Naive thymus-derived CD4-positive, alpha-beta T cell (primary cell): ENCODE measurements at regions of chr13 and their contacts with region 1.

Region 1: GRCh38 chr13:25574437-25575411 is 202.9 kb downstream of the ATP8A2 start:
- DNase-seq: peak; percentile 42 to 79 (median 68)
- ATAC-seq: peak; percentile 80
- H3K4me3 ChIP-seq: no peak overlapping the region
- H3K4me3 Mint-ChIP-seq: no peak overlapping the region
- H3K27ac ChIP-seq: no peak overlapping the region
- H3K27ac Mint-ChIP-seq: no peak overlapping the region
- H3K4me1 ChIP-seq: no peaks in the 10 kb centered on the region
- H3K4me1 Mint-ChIP-seq: peaks cover 0 to 10% (median 0%) of the 10 kb centered on the region in 7 donors
- H3K27me3 ChIP-seq: no peaks in the 10 kb centered on the region
- H3K27me3 Mint-ChIP-seq: peaks cover 31 to 58% (median 40%) of the 10 kb centered on the region in 5 donors

Region 2: GRCh38 chr13:25501231-25501630 is 73.5 kb before region 1 on chr13:
- CTCF ChIA-PET with region 1: no interaction called
- POLR2A ChIA-PET with region 1: no interaction called
- intact Hi-C with region 1: no loop called
- DNase-seq: no peak
- ATAC-seq: no peak
- H3K4me3 ChIP-seq: no peak overlapping the region
- H3K4me3 Mint-ChIP-seq: no peak overlapping the region
- H3K27ac ChIP-seq: no peak overlapping the region
- H3K27ac Mint-ChIP-seq: no peak overlapping the region
- H3K4me1 ChIP-seq: no peaks in the 10 kb centered on the region
- H3K4me1 Mint-ChIP-seq: no peaks in the 10 kb centered on the region
- H3K27me3 ChIP-seq: no peaks in the 10 kb centered on the region
- H3K27me3 Mint-ChIP-seq: peaks cover 6 to 49% (median 23%) of the 10 kb centered on the region in 5 donors

Region 3: DNA sequence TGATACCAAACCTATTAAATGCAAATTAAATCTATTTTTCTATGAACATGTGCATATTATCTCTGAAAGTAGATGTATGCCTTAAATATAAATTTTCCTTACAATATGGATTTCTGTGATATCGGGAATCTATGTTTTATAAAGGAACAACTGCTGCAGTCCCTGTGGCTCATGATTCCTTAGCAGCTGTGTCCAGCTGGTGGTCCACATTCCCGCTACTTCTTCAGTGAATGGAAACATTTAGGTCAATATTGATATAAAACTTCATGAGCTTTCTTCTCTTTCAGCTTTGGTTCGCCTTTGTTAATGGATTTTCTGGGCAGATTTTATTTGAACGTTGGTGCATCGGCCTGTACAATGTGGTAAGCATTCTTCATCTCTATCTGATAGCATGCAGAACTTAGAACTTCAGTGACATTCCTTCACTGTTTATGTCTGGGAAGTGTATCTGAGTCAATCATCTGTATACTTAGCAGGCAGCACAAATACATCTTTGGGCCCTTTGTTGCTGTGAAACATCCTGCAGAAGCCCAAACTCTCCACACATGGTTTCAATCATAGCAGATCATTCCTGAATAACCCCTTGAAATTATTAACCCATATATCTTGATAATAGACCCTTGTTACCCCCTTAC is 253.2 kb after region 1 on chr13:
- CTCF ChIA-PET with region 1: interaction called, 5 read pairs
- POLR2A ChIA-PET with region 1: no interaction called
- intact Hi-C with region 1: loop called (anchors 1 to 2 kb)
- DNase-seq: no peak
- ATAC-seq: no peak
- H3K4me3 ChIP-seq: no peak overlapping the region
- H3K4me3 Mint-ChIP-seq: no peak overlapping the region
- H3K27ac ChIP-seq: no peak overlapping the region
- H3K27ac Mint-ChIP-seq: no peak overlapping the region
- H3K4me1 ChIP-seq: no peaks in the 10 kb centered on the region
- H3K4me1 Mint-ChIP-seq: peaks cover 0 to 5% (median 0%) of the 10 kb centered on the region in 7 donors
- H3K27me3 ChIP-seq: peaks cover 0 to 4% of the 10 kb centered on the region in 2 donors
- H3K27me3 Mint-ChIP-seq: peaks cover 0 to 4% (median 0%) of the 10 kb centered on the region in 5 donors

Region 4: GRCh38 chr13:26062844-26063444 is 488.2 kb after region 1 on chr13:
- CTCF ChIA-PET with region 1: interaction called, 17 read pairs
- POLR2A ChIA-PET with region 1: no interaction called
- intact Hi-C with region 1: loop called (anchors 1 kb)
- DNase-seq: peak in 7 of 9 donors; percentile 30 to 67 (median 58)
- ATAC-seq: peak; percentile 66
- H3K4me3 ChIP-seq: no peak overlapping the region
- H3K4me3 Mint-ChIP-seq: no peak overlapping the region
- H3K27ac ChIP-seq: no peak overlapping the region
- H3K27ac Mint-ChIP-seq: no peak overlapping the region
- H3K4me1 ChIP-seq: no peaks in the 10 kb centered on the region
- H3K4me1 Mint-ChIP-seq: peaks cover 0 to 16% (median 4%) of the 10 kb centered on the region in 7 donors
- H3K27me3 ChIP-seq: no peaks in the 10 kb centered on the region
- H3K27me3 Mint-ChIP-seq: peaks cover 0 to 7% (median 0%) of the 10 kb centered on the region in 5 donors

Region 5: DNA sequence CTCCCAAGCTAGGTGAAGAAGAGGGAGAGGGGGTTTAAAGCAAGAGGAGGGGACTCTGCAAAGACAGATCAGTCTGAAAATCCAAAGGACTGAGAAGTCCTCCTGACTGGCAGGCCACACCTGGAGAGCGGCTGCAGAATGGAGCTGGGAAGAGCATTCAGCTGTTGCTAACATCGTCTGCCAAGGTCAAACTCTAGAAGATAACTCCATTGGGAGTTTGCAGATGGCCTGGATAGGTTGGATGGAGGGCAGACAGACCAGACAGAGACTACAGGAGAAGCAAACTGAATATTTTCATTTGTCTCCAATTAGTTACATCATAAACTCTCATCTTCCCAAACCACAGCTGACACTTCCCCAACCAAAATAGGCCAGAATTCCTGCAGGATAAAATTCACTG is 497.0 kb after region 1 on chr13:
- CTCF ChIA-PET with region 1: interaction called, 17 read pairs
- POLR2A ChIA-PET with region 1: no interaction called
- intact Hi-C with region 1: loop called (anchors 1 kb)
- DNase-seq: no peak
- ATAC-seq: no peak
- H3K4me3 ChIP-seq: no peak overlapping the region
- H3K4me3 Mint-ChIP-seq: no peak overlapping the region
- H3K27ac ChIP-seq: no peak overlapping the region
- H3K27ac Mint-ChIP-seq: no peak overlapping the region
- H3K4me1 ChIP-seq: no peaks in the 10 kb centered on the region
- H3K4me1 Mint-ChIP-seq: peaks cover 0 to 3% (median 0%) of the 10 kb centered on the region in 7 donors
- H3K27me3 ChIP-seq: peaks cover 0 to 2% of the 10 kb centered on the region in 2 donors
- H3K27me3 Mint-ChIP-seq: peaks cover 11 to 42% (median 29%) of the 10 kb centered on the region in 5 donors

Region 6: GRCh38 chr13:26498656-26499591 is 924.2 kb after region 1 on chr13:
- CTCF ChIA-PET with region 1: no interaction called
- POLR2A ChIA-PET with region 1: no interaction called
- intact Hi-C with region 1: loop called in 1 of 2 experiments (anchors 2 kb)
- DNase-seq: no peak
- ATAC-seq: no peak
- H3K4me3 ChIP-seq: no peak overlapping the region
- H3K4me3 Mint-ChIP-seq: no peak overlapping the region
- H3K27ac ChIP-seq: no peak overlapping the region
- H3K27ac Mint-ChIP-seq: no peak overlapping the region
- H3K4me1 ChIP-seq: no peaks in the 10 kb centered on the region
- H3K4me1 Mint-ChIP-seq: peaks cover 4 to 15% (median 5%) of the 10 kb centered on the region in 7 donors
- H3K27me3 ChIP-seq: no peaks in the 10 kb centered on the region
- H3K27me3 Mint-ChIP-seq: peaks cover 0 to 9% (median 4%) of the 10 kb centered on the region in 5 donors

Region 7: DNA sequence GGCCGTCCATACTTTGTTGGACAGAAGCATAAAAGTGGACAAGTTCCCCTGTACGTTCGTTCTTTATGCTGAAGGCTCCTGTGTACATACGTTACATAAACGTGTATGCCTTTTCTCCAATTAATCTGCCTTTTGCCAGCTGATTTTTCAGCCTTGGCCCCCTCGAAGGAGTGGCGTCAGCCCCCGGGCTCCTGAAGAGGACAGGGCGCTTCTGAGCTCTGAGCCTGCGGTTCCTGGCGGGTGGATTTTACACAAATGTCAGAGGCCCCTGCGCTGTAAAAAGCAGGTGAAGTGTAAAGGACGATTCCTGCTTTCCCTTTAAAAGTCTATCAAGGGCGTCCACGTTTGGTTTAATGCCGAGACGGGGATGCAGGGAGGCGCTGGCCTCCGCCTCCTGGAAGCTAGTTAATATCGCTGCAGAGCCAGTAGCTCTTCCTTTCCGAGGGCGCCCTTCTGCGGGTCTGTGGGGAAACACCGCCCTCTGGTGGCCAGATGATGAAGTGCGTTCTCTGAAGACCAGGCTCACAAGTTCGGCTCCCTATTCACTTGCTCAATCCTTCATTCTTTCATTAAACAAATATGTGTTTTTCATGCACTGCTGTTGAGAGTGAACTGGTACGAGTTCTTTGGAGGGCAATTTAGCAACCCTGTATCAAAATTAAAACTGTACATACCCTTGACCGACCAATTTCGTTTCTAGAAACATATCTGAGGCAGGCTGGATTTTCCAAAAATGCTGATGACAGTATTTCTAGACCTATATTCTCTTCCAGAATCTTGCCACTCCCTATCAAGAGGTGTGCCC is 1123.9 kb after region 1 on chr13:
- CTCF ChIA-PET with region 1: no interaction called
- POLR2A ChIA-PET with region 1: no interaction called
- intact Hi-C with region 1: loop called in 1 of 2 experiments (anchors 1 kb)
- DNase-seq: peak; percentile 52 to 81 (median 79)
- ATAC-seq: peak; percentile 89
- H3K4me3 ChIP-seq: no peak overlapping the region
- H3K4me3 Mint-ChIP-seq: peak overlapping the region in 5 of 10 donors; percentile 28 to 45 (median 39)
- H3K27ac ChIP-seq: no peak overlapping the region
- H3K27ac Mint-ChIP-seq: no peak overlapping the region
- H3K4me1 ChIP-seq: no peaks in the 10 kb centered on the region
- H3K4me1 Mint-ChIP-seq: peaks cover 0 to 10% (median 5%) of the 10 kb centered on the region in 7 donors
- H3K27me3 ChIP-seq: no peaks in the 10 kb centered on the region
- H3K27me3 Mint-ChIP-seq: peaks cover 0 to 23% (median 3%) of the 10 kb centered on the region in 5 donors